ENCODE measurements at regions of chr3 and their contacts with region 1.

Region 1: GRCh38 chr3:115156042-115156654 is 9.1 kb upstream of the ZBTB20 start:
- DNase-seq: no peak
- ATAC-seq: no peak
- H3K4me3 ChIP-seq: no peak overlapping the region
- H3K27ac ChIP-seq: no peak overlapping the region
- H3K4me1 ChIP-seq: peaks cover 0 to 7% (median 0%) of the 10 kb centered on the region in 12 donors
- H3K27me3 ChIP-seq: no peaks in the 10 kb centered on the region
- CTCF ChIP-seq: no peak
- POLR2A ChIP-seq: no peak

Region 2: DNA sequence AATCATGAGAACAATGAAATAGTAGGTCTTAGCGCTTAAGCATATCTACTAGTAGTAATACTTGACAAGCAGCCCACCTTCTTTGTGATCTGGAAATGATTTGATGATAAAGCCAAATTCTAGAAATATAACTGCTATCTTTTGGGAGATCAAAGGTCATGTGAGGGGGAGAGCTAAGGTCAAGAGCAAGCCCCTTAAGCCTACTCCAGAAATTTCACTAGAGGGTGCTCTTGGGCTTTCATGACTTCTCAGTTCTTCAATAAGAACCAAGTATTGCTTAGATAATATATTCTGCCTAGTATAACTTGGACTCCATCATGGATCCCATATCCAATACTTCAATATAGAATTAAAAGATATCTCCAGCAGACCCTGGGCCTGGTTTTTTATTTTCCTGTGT is 328.7 kb before region 1 on chr3:
- intact Hi-C with region 1: loop called in 1 of 10 experiments (anchors 5 kb)
- DNase-seq: no peak
- ATAC-seq: peak in 3 of 4 donors; percentile 66 to 68 (median 67)
- H3K4me3 ChIP-seq: no peak overlapping the region
- H3K27ac ChIP-seq: no peak overlapping the region
- H3K4me1 ChIP-seq: peaks cover 0 to 6% (median 0%) of the 10 kb centered on the region in 12 donors
- H3K27me3 ChIP-seq: no peaks in the 10 kb centered on the region
- CTCF ChIP-seq: peak; percentile 49 to 80 (median 66)
- POLR2A ChIP-seq: no peak

Measured in heart left ventricle (tissue), 16 donors.